Transverse colon (tissue), 4 donors: ENCODE measurements at regions of chr11 and their contacts with region 1.

Region 1: GRCh38 chr11:128630367-128631230 is 43.2 kb upstream of the ETS1 start:
- DNase-seq: peak; percentile 94
- H3K4me3 ChIP-seq: no peak overlapping the region
- H3K27ac ChIP-seq: peak overlapping the region; percentile 5 to 19 (median 12)
- H3K4me1 ChIP-seq: peaks cover 0 to 33% (median 10%) of the 10 kb centered on the region in 4 donors
- H3K27me3 ChIP-seq: no peaks in the 10 kb centered on the region
- CTCF ChIP-seq: peak; percentile 85 to 96 (median 89)
- EP300 ChIP-seq: no peak
- POLR2A ChIP-seq: no peak

Region 2: DNA sequence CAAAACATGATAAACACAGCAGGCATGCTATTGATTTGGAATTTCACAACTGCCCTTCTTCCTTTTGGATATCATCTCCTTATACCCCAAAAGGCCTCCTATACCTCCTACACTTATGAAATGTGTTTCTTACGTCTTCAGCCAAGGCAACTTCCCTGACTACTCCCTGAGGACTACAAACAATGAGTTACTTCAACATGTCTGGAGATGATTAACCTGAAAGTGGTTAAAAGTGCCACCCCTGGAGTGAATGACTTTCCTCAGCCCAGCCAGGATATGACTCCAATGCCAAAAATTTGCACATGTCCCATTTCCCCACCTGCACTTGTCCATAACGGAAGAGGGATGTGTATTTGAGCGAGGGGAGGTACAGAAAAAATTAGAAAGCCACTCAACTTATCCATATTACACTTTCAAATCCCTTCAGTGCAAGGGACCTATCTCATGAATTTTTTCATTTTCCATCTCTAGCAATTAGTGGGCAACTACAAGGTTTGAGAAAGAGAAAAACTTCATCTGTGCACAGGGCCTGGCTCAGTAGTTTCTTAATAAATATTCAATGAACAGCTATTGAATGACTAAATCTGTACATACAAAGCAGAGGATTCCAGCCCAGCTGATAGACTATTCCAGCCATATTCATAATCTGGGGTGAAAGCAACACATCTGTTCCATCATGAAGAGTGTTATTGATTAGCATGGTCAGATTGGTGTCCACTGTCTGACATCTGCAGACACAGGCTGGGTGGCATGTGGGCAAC is 1666.8 kb before region 1 on chr11:
- in situ Hi-C with region 1: no loop called
- intact Hi-C with region 1: no loop called
- DNase-seq: peak; percentile 17
- H3K4me3 ChIP-seq: no peak overlapping the region
- H3K27ac ChIP-seq: peak overlapping the region; percentile 24 to 57 (median 54)
- H3K4me1 ChIP-seq: peaks cover 0 to 18% (median 9%) of the 10 kb centered on the region in 4 donors
- H3K27me3 ChIP-seq: no peaks in the 10 kb centered on the region
- CTCF ChIP-seq: no peak
- EP300 ChIP-seq: no peak
- POLR2A ChIP-seq: no peak

Region 3: DNA sequence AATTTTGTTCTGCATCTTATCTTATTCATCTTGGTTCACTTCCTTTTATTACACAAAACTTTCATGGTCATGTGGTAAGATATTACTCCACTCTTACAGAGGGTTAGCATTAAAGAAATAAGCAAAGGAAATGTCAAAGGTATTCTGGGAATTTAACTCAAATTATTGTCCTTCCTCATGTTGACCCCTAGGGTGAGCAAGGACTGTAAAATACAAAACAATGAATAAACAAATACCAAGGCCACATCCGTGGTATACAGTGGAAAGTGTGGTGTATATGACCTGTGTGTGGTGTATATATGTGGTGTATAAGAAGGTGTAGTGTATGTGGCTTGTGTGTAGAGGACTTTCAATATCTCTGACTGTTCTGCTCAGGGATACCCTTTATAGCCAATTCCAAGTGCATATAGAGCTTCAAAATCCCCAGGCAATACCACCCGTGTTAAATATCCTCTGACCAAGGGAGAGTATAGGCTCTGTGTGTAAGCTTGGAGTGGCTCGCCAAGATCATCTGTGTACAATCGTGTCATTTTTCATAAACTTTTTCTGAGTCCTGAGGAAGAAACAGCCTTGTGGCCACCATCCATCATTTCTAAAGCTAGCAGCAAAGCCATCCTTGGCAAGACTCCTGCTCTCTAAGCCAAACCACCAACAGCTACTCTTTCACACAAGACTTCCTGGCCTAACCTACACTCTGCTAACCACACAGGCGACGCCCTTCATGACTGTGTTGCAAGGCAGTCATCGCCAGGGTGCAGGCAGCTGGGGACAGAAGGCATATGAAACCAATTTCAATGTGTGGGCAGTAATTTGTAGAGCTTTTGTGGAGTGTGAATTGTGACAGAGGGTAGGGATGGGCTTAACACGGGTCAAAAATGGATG is 591.2 kb before region 1 on chr11:
- in situ Hi-C with region 1: loop called in 1 of 4 experiments (anchors 25 kb)
- intact Hi-C with region 1: no loop called
- DNase-seq: peak; percentile 48
- H3K4me3 ChIP-seq: no peak overlapping the region
- H3K27ac ChIP-seq: no peak overlapping the region
- H3K4me1 ChIP-seq: peaks cover 0 to 8% (median 2%) of the 10 kb centered on the region in 4 donors
- H3K27me3 ChIP-seq: no peaks in the 10 kb centered on the region
- CTCF ChIP-seq: no peak
- EP300 ChIP-seq: no peak
- POLR2A ChIP-seq: no peak

Region 4: DNA sequence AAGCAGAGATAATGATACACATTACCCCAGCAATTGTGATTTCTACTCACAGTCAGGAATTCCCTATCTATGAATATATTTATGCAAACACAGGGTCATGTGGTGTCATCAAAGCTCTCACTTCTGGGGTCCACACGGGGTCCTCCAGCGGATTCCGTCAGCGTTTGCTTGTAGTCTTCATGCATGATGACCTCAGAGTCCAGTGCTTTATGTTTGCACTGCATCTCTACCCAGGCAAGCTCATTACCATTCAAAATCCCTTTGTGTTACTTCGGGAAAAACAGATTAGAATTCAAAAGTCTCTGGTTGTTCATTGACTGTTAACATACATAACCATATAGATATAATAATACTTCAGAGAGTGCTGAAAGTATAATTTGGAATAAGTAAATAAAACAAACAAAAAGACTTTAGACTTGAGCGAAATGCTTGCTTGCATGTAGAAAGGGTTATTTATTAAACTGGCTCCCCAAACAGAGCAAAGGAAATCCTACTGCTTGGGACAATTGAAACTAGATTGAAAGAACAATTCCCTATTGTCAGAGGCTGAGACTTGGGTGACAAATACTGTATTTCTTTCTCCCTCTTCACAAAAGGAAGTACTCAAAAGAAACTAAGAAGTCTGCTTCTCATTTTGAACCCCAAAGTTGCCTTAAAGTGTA is 466.4 kb before region 1 on chr11:
- in situ Hi-C with region 1: loop called in 2 of 4 experiments (anchors 5 to 10 kb)
- intact Hi-C with region 1: no loop called
- DNase-seq: no peak
- H3K4me3 ChIP-seq: no peak overlapping the region
- H3K27ac ChIP-seq: no peak overlapping the region
- H3K4me1 ChIP-seq: no peaks in the 10 kb centered on the region
- H3K27me3 ChIP-seq: no peaks in the 10 kb centered on the region
- CTCF ChIP-seq: no peak
- EP300 ChIP-seq: no peak
- POLR2A ChIP-seq: no peak

Region 5: GRCh38 chr11:128172046-128172878 is 458.3 kb before region 1 on chr11:
- in situ Hi-C with region 1: loop called (anchors 5 to 10 kb)
- intact Hi-C with region 1: loop called (anchors 10 kb)
- DNase-seq: peak; percentile 88
- H3K4me3 ChIP-seq: no peak overlapping the region
- H3K27ac ChIP-seq: no peak overlapping the region
- H3K4me1 ChIP-seq: peaks cover 0 to 3% (median 0%) of the 10 kb centered on the region in 4 donors
- H3K27me3 ChIP-seq: no peaks in the 10 kb centered on the region
- CTCF ChIP-seq: peak; percentile 71 to 91 (median 75)
- EP300 ChIP-seq: no peak
- POLR2A ChIP-seq: no peak

Region 6: GRCh38 chr11:128279866-128280265 is 350.7 kb before region 1 on chr11:
- in situ Hi-C with region 1: loop called (anchors 5 to 10 kb)
- intact Hi-C with region 1: no loop called
- DNase-seq: no peak
- H3K4me3 ChIP-seq: no peak overlapping the region
- H3K27ac ChIP-seq: no peak overlapping the region
- H3K4me1 ChIP-seq: no peaks in the 10 kb centered on the region
- H3K27me3 ChIP-seq: no peaks in the 10 kb centered on the region
- CTCF ChIP-seq: no peak
- EP300 ChIP-seq: no peak
- POLR2A ChIP-seq: no peak

Region 7: GRCh38 chr11:128290106-128290840 is 340.3 kb before region 1 on chr11:
- in situ Hi-C with region 1: loop called (anchors 5 to 10 kb)
- intact Hi-C with region 1: loop called (anchors 5 kb)
- DNase-seq: peak; percentile 86
- H3K4me3 ChIP-seq: peak overlapping the region in 1 of 4 donors; percentile 32
- H3K27ac ChIP-seq: peak overlapping the region; percentile 85 to 87 (median 86)
- H3K4me1 ChIP-seq: peaks cover 15 to 54% (median 33%) of the 10 kb centered on the region in 4 donors
- H3K27me3 ChIP-seq: no peaks in the 10 kb centered on the region
- CTCF ChIP-seq: peak; percentile 83 to 96 (median 90)
- EP300 ChIP-seq: no peak
- POLR2A ChIP-seq: peak; percentile 50

Region 8: DNA sequence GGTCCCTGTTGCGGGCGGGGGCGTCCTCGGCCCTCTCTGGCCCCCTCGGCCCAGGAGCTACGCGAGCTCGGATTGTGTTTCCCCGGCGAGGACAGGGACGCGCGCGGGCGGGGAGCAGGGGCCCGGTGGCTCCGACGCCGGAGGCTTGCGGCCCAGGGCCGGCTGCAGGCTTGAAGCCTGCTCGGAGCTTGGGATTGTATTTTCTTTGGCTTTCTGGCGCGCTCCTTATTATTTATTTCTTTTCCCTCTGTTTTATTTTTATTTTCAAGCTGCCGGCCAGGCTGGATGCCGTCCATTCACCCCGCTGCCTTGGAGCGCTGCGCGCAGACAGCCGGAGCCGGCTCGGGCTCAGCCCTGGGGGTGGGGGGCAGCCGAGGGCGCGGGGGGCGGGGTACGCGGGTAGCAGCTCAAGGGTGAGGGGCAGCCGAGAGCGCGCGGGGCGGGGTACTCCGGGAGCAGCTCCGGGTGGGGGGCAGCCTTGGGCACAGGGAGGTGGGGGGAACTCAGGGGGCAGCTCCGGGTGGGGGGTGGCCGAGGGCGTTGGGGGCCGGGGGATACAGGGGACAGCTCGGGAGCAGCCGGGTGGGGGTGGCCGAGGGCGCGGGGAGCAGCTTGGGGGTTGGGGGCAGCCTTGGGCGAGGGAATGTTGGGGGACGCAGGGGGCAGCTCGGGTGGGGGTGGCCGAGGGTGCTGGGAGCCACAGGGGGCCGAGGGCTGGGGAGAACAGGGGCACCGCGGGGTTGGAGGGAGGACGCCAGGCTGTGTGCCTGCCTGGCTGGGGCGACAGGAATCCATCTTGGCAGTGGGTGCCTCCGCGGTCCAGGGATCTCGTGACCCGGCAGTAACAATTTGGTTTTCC is 193.8 kb after region 1 on chr11:
- in situ Hi-C with region 1: loop called in 1 of 4 experiments (anchors 25 kb)
- intact Hi-C with region 1: loop called (anchors 10 kb)
- DNase-seq: no peak
- H3K4me3 ChIP-seq: no peak overlapping the region
- H3K27ac ChIP-seq: no peak overlapping the region
- H3K4me1 ChIP-seq: peaks cover 0 to 4% (median 2%) of the 10 kb centered on the region in 4 donors
- H3K27me3 ChIP-seq: no peaks in the 10 kb centered on the region
- CTCF ChIP-seq: no peak
- EP300 ChIP-seq: no peak
- POLR2A ChIP-seq: no peak